Esophagus squamous epithelium (tissue), 5 donors: ENCODE measurements at regions of chr5 and their contacts with region 1.

Region 1: GRCh38 chr5:179623003-179623880 is at the start of gene HNRNPH1:
- DNase-seq: peak; percentile 95
- H3K4me3 ChIP-seq: peak within 1 kb of the TSS; percentile 84 to 100 (median 98)
- H3K27ac ChIP-seq: peak within 1 kb of the TSS; percentile 99 to 100 (median 100)
- H3K4me1 ChIP-seq: peaks cover 26 to 57% (median 41%) of the 10 kb centered on the region in 3 donors
- H3K27me3 ChIP-seq: no peaks in the 10 kb centered on the region
- CTCF ChIP-seq: peak in 1 of 6 experiments; percentile 46
- POLR2A ChIP-seq: peak in 3 of 4 donors; percentile 77 to 100 (median 100)
- total RNA-seq, gene HNRNPH1: 209 to 645 (median 383) TPM

Region 2: DNA sequence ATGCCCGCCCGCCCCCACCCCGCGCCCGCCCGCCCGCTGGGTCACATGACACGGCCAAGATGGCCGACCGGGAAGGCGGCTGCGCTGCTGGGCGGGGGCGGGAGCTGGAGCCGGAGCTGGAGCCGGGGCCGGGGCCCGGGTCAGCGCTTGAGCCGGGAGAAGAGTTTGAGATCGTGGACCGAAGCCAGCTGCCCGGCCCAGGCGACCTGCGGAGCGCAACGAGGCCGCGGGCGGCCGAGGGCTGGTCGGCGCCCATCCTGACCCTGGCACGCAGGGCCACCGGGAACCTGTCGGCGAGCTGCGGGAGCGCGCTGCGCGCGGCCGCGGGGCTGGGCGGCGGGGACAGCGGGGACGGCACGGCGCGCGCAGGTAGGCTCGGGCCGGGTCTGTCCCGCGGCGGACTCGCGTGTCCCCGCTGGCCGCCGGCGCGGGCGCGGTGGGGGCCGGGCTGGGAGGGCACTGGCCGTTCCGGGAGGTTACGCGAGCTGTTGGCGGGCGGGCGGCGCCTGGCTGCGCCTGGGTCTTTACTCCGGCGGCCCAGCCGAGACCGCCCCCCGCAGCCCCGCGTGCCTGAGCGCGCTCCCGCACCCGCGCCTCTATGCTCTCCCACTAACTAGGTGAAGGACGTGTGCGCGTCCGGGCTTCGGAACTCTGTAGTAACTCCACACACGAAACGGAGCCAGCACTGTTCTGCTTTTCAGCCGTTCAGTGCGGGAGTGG is 72.6 kb before region 1 on chr5 and contains the start of gene RUFY1:
- intact Hi-C with region 1: loop called (anchors 5 kb)
- DNase-seq: peak; percentile 49
- H3K4me3 ChIP-seq: peak within 1 kb of the TSS; percentile 76 to 92 (median 79)
- H3K27ac ChIP-seq: peak within 1 kb of the TSS; percentile 93 to 99 (median 96)
- H3K4me1 ChIP-seq: peaks cover 12 to 58% (median 34%) of the 10 kb centered on the region in 3 donors
- H3K27me3 ChIP-seq: no peaks in the 10 kb centered on the region
- CTCF ChIP-seq: peak in 2 of 6 experiments; percentile 29 to 49
- POLR2A ChIP-seq: peak in 3 of 4 donors; percentile 54 to 91 (median 78)
- total RNA-seq, gene RUFY1: 27.1 to 63.8 (median 45.8) TPM